Aorta (tissue), 5 donors: ENCODE measurements at regions of chr14 and their contacts with region 1.

Region 1: GRCh38 chr14:95483309-95484165 is 32.9 kb downstream of the SYNE3 start:
- DNase-seq: peak; percentile 91 to 94
- ATAC-seq: peak; percentile 90
- H3K4me3 ChIP-seq: no peak overlapping the region
- H3K27ac ChIP-seq: peak overlapping the region; percentile 48 to 58
- H3K4me1 ChIP-seq: peaks cover 0 to 6% of the 10 kb centered on the region in 2 donors
- H3K27me3 ChIP-seq: no peaks in the 10 kb centered on the region

Region 2: GRCh38 chr14:94769391-94770250 is 713.9 kb before region 1 on chr14 and contains the start of gene GSC:
- intact Hi-C with region 1: no loop called
- DNase-seq: peak; percentile 50 to 82
- ATAC-seq: peak; percentile 53
- H3K4me3 ChIP-seq: peak within 1 kb of the TSS; percentile 14 to 57
- H3K27ac ChIP-seq: no peak within 1 kb of the TSS
- H3K4me1 ChIP-seq: no peaks in the 10 kb centered on the region
- H3K27me3 ChIP-seq: peaks cover 0 to 3% of the 10 kb centered on the region in 2 donors
- total RNA-seq, gene GSC: 0.55 to 1.3 TPM

Region 3: DNA sequence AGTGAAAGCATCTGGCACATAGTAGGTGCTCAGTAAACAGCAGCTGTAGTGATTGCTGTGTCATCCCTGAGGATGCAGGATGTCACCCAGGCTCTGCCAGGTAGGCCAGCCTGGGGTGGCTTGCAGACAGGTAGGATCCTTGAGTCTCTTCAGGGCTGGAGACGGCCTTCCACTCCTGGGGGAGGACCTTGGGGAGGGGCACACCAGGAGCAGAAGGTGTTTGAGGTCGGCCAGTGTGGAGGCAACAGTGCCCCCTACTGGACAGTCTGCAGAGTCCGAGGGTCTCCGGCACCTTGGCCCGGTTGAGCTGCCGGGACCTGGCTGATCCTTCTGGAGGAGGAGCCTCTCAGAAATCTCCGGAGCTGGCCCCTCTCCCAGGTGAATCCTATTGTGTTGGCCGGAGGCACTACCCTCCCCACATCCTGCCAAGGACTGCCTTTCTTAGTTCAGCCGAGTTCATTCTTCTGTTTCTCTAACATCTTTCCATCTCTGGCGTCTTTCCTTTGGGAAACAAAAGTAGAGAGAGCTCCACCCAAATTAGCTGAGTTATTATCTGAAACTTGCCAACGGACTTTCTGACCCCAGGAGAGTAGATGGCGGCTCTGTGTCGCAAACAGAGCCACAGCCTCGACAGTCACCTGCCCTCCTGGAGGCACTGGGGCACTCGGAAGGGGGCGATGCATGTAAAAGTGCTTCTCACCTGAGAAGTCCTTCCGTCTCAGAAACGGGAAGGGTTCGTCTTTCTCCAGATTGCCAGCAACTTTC is 122.0 kb before region 1 on chr14:
- intact Hi-C with region 1: no loop called
- DNase-seq: no peak
- ATAC-seq: peak; percentile 54
- H3K4me3 ChIP-seq: no peak overlapping the region
- H3K27ac ChIP-seq: no peak overlapping the region
- H3K4me1 ChIP-seq: no peaks in the 10 kb centered on the region
- H3K27me3 ChIP-seq: no peaks in the 10 kb centered on the region

Region 4: DNA sequence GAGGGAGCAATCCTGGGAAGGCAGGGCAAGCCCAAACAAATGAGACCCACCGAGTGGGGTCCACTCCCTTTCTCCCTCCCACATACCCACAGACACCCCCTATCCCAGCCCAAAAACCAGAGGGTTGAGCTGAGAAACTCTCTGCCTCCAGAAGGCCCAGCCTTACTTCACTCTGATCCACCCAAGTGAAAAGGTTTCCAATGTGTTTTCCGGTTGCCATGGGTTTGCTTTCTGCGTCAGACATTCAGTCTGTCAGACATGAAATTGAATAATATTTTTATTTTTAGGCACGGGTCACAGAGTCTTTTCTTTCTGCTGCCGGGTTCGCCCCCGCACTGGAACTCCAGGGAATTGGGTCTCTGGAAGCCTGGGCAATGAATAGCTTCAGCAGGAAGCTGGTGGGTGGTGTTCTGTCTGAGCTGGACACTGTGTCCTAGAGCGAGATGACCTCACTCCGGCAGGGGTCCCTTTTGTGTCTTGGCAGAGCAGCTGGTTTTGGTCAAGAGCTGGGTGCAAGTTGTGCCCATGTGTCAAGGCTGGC is 94.0 kb before region 1 on chr14:
- intact Hi-C with region 1: no loop called
- DNase-seq: peak; percentile 76 to 93
- ATAC-seq: peak; percentile 79
- H3K4me3 ChIP-seq: no peak overlapping the region
- H3K27ac ChIP-seq: peak overlapping the region in 1 of 2 donors; percentile 70
- H3K4me1 ChIP-seq: no peaks in the 10 kb centered on the region
- H3K27me3 ChIP-seq: no peaks in the 10 kb centered on the region

Region 5: GRCh38 chr14:95424529-95424928 is 59.0 kb before region 1 on chr14:
- intact Hi-C with region 1: no loop called
- DNase-seq: no peak
- ATAC-seq: no peak
- H3K4me3 ChIP-seq: no peak overlapping the region
- H3K27ac ChIP-seq: no peak overlapping the region
- H3K4me1 ChIP-seq: no peaks in the 10 kb centered on the region
- H3K27me3 ChIP-seq: no peaks in the 10 kb centered on the region

Region 6: DNA sequence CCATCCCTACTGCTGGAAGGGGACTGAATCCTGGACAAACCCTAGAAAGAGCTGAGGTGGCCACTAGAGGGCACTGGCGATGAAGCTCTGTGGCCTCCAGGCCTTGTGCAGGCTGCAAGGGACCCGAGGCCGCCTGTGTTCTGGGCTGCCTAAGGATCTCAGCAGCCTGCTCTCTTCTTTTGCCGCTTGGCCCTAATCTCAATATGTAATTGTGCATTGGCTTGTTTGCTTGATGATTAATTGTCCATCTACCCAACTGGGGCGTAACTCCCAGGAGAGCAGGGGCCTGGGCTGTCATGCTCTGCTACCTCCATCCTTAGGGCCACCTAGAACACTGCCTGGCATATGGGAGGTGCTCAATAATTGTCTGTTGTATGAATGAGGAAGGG is 40.9 kb before region 1 on chr14:
- intact Hi-C with region 1: loop called in 1 of 2 experiments (anchors 5 kb)
- DNase-seq: peak; percentile 90 to 92
- ATAC-seq: peak; percentile 93
- H3K4me3 ChIP-seq: no peak overlapping the region
- H3K27ac ChIP-seq: no peak overlapping the region
- H3K4me1 ChIP-seq: no peaks in the 10 kb centered on the region
- H3K27me3 ChIP-seq: no peaks in the 10 kb centered on the region

Region 7: DNA sequence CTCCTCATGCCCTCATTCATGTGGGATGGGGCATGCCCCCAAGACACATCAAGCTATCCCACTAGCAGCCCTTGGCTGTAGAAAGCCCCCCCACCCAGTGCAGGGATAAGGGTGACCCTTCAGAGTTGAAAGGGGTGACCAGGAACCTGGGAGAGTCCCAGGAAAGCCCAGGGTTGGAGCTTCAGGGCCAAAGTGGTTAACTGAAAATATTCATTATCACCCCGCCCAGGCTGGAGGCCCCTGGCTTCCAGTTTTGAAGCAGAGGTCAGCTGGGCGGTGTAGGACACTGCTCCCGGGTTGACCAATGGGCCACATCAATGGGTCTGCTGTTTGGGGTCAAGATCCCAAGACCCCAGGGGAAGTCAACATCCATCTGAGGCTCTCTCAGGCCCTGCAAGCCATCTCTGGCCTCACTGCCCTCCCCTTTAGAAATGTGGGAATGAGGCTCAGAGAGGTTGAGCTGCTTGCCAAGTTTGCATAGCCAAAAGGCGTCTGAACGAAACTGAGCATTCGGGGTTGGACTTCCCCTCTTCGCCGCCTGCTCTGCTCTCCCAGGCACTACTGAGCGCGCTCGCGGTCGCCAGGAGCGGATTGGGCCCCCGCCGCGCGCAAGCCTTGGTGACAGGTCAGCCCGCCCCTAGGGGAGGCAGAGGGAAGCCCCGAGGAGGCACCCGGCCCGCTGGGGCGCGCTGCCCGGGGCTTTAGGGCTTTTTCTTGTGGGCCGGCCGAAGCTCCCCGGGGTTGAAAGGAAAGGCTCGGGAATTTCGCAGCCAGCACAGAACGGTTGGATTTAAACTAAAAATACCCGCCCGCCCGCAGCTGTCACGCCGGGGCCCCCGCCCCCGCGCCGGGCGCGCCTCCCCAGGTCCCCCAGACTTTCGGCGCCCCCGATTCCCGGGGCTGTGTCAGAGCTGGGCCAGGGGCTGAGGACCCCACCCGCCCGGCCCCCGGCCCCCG is 32.3 kb after region 1 on chr14:
- intact Hi-C with region 1: loop called (anchors 5 kb)
- DNase-seq: peak; percentile 90
- ATAC-seq: peak; percentile 59
- H3K4me3 ChIP-seq: peak overlapping the region; percentile 39 to 92
- H3K27ac ChIP-seq: peak overlapping the region; percentile 6 to 79
- H3K4me1 ChIP-seq: peaks cover 2% of the 10 kb centered on the region in 2 donors
- H3K27me3 ChIP-seq: no peaks in the 10 kb centered on the region